Activated T-helper 1 cell treated with anti-CD3 and anti-CD28 coated beads, Interleukin-12 subunit alpha, Interleukin-12 subunit beta, Interleukin-2, Interleukin-4 antibody, amounts not matched to agents 30 ng/mL and 10 ng/mL and 1 ng/mL, durations not matched to agents 14 hours and 24 hours and 36 hours (primary cell): ENCODE measurements at regions of chr19 and their contacts with region 1.

Region 1: DNA sequence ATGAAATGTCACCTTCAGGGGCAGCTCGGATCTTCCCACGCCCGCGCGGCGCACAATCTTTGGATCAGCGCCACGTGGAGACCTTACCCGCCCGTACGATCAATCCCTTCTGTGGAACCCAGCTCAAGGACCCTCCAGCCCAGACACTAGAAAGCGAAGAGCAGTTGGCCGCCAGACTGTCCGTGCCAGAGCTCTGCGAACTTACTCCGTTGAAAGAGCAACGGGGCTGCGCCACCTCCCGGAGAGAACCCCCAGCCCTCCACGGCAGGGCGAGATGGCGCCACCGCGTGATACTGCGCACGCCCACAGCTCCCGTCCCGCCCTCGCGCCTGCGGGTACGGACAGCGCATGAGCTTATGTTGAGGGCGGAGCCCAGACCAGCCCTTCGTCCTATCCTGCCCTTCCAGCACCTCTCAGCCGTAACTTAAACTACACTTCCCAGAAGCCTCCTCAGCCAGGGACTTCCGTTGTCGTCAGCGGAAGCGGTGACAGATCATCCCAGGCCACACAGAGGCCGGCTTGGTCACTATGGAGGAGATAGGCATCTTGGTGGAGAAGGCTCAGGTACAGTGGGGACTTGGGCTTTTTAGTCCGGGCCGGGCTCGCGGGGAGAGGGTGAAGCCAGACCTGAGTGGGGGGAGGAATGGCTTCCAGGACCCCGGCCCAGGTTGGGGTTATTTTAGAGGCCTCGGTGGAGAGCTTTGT is at the start of gene PSMC4:
- DNase-seq: peak; percentile 99
- H3K4me3 Mint-ChIP-seq: peak within 1 kb of the TSS; percentile 95
- H3K27ac Mint-ChIP-seq: peak within 1 kb of the TSS; percentile 97
- H3K4me1 Mint-ChIP-seq: peaks cover 54% of the 10 kb centered on the region
- H3K27me3 Mint-ChIP-seq: no peaks in the 10 kb centered on the region
- total RNA-seq, gene PSMC4: 189 and 190 TPM in 2 replicates

Region 2: DNA sequence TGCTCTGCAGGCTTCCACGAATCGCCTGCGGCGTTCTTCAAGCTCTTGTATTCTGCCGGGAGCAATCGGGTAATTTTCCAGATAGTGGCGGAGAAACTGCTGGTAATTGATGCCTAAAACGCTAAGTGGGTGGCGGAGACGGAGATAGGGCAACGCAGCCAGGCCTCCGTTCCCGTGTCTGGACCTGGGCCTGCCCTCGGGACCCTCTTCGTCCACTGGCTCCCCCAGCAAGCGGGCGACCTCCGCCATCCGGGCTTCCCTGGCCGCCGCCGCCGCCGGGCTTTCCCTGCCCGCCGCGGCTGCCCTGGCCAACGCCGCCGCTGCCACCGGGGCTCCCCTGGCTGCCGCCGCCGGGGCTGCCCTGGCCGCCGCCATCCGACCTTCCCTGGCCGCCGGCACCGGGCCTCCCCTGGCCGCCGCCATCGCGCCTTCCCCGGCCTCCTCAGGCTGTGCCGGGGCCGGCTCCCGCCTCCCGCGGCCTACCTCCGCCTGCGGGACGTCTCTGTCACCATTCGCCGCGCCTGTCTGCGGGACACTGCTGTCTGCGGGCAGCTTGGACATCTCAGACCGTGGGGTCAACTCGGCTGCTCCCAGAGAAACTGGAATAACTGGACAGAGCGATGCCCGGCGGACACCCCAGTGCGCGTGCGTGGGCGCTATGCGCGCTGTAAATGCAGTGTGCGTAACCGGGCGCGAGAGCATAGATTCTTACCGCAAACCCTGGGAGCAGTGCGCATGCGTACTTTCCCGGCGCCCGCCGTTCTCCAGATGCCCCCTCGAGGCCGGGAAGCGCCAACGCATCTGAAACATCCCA is 431.1 kb before region 1 on chr19 and contains the start of gene EID2:
- intact Hi-C with region 1: loop called (anchors 1 kb)
- DNase-seq: peak; percentile 92
- H3K4me3 Mint-ChIP-seq: peak within 1 kb of the TSS; percentile 95
- H3K27ac Mint-ChIP-seq: peak within 1 kb of the TSS; percentile 91
- H3K4me1 Mint-ChIP-seq: peaks cover 36% of the 10 kb centered on the region
- H3K27me3 Mint-ChIP-seq: peaks cover 2% of the 10 kb centered on the region
- total RNA-seq, gene EID2: 17.0 and 17.6 TPM in 2 replicates

Region 3: DNA sequence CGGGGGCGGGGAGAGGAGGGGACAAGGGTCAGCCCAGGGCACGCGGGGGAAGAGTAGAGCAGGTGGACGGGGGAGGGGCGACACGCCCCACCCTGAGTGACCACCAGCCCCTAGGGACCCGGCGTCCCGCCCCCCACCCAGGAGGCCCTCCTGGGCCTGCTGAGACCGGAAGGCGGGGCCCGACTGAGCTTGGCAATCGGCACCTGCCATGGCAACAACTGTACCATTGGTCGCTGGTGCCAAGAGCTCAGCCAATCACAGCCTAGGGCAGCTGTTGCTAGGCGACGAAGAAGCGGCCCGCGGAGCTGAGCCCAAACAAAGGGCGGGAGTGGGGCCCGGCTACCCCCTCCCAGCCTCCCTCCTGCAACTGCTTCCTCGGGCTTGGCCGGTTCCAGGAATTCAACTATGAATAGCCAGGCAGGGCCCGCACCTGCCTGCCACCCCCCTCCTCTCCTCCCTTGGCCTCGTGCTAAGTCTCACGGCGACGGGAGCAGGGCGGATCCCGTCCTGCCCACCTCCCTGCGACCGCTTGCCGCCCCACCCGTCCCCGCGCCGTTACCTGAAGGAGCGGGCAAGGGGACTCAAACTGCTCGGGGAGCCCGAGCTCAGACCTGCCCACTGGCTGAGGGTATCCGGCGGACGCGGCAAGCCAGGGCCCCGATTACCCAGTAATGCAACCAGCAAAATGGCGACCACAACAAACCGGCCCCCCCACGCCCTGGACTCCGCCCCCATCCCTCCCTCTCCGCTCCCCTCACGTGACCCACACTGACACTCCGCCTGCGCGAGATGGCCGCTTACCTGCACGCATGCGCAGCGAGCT is 137.2 kb before region 1 on chr19 and contains the start of gene DYRK1B:
- intact Hi-C with region 1: loop called (anchors 2 kb)
- DNase-seq: peak; percentile 95
- H3K4me3 Mint-ChIP-seq: peak within 1 kb of the TSS; percentile 69
- H3K27ac Mint-ChIP-seq: peak within 1 kb of the TSS; percentile 78
- H3K4me1 Mint-ChIP-seq: peaks cover 35% of the 10 kb centered on the region
- H3K27me3 Mint-ChIP-seq: no peaks in the 10 kb centered on the region
- total RNA-seq, gene DYRK1B: 4.2 and 5.5 TPM in 2 replicates

Region 4: DNA sequence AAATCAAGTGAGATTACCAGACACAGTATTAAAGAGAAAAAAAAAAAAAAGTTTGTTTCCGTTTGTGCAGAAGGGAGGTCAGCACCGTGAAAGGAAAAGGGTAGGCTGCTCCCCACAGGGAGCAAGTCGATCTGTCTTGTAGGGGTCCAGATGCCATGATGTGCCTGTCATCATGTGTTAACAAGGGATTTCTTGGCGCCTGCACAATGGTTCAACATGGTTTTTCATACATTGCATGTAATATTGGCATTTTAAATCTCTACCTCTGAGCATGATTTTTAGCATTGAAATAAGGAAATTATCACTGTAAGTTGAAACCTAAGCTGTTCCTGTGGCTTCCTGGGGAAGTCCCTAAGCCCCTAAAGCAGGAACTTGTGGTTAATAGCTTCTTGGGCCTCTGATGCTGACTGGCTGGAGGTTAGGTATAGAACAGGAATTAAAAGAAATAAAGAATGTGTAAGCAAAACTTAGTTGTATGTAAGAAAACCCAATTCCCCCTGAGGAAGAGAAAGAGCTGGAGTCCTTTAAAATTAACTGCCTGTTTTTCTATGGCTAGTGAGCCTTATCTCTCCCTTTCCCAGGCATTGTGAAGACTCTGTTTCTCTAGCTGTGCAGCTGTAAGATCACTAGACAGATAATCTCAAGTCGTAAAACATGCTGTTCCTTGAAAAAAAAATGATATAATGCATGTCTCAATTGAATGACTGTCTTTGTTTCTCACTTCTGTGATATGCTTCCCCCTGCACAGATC is 29.0 kb before region 1 on chr19:
- intact Hi-C with region 1: loop called (anchors 1 kb)
- DNase-seq: peak; percentile 45
- H3K4me3 Mint-ChIP-seq: peak overlapping the region; percentile 63
- H3K27ac Mint-ChIP-seq: peak overlapping the region; percentile 86
- H3K4me1 Mint-ChIP-seq: peaks cover 77% of the 10 kb centered on the region
- H3K27me3 Mint-ChIP-seq: peaks cover 2% of the 10 kb centered on the region

Region 5: DNA sequence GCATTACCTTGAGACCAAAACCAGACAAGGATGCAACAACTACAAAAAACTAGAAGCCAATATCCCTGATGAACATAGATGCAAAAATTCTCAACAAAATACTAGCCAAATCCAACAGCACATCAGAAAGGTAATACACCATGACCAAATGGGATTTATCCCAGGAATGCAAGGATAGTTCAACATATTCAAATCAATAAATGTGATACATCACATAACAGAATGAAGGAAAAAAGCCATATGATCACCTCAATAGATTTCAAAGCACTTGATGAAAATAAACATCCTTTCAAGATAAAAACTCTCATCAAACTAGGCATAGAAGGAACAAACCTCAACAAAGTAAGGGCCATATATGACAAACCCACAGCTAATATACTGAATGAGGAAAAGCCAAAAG is 15.8 kb after region 1 on chr19:
- intact Hi-C with region 1: no loop called
- DNase-seq: no peak
- H3K4me3 Mint-ChIP-seq: no peak overlapping the region
- H3K27ac Mint-ChIP-seq: no peak overlapping the region
- H3K4me1 Mint-ChIP-seq: no peaks in the 10 kb centered on the region
- H3K27me3 Mint-ChIP-seq: no peaks in the 10 kb centered on the region

Region 6: DNA sequence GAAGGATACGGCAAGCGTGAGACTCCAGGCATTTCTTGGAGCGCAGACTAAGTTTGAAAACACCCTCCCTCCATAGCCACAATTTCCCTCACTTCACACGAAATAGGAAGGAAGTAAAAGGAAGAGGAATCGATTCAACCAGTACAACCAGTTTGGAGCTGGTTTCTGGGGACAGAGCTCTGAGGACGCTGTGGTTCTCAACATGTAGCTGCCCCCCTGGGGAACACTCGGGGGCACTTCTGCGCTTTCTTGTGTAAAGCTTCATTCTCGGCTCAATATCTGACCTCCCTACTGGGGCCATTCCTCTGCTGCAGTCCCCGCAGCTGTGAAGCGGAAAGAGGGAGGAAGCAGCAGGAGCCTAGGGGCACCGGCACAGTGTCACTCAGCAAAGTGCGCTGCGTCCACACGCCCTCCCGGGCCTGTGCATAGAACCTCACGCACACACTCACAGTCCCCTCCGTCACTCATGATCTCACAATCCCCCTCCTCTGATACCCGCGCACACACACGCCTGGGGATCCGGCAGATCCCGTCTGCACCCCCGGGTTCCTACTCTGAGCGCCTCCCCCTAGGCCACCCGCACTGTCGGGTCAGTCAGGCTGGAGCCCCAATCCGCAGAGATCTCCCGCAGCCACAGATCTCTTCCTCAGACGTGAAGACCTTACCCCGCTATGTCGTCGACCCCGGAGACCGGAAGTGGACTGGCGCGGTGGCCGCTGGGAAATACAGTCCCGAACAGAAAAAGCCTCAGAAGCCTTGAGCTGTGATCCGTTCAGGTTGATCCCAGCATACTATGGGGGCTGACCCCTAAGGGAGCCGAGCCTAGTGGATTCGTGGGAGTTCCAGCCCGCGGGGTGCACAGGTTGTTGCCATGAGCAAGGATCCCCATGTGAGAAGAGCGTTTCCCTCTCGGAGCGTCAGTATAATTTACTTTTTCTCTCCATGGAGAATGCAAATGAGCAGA is 119.7 kb after region 1 on chr19 and contains the start of gene ZNF780A:
- intact Hi-C with region 1: loop called (anchors 1 kb)
- DNase-seq: peak; percentile 73
- H3K4me3 Mint-ChIP-seq: peak within 1 kb of the TSS; percentile 100
- H3K27ac Mint-ChIP-seq: peak within 1 kb of the TSS; percentile 99
- H3K4me1 Mint-ChIP-seq: peaks cover 43% of the 10 kb centered on the region
- H3K27me3 Mint-ChIP-seq: peaks cover 3% of the 10 kb centered on the region
- total RNA-seq, gene ZNF780A: 14.8 and 16.7 TPM in 2 replicates

Region 7: DNA sequence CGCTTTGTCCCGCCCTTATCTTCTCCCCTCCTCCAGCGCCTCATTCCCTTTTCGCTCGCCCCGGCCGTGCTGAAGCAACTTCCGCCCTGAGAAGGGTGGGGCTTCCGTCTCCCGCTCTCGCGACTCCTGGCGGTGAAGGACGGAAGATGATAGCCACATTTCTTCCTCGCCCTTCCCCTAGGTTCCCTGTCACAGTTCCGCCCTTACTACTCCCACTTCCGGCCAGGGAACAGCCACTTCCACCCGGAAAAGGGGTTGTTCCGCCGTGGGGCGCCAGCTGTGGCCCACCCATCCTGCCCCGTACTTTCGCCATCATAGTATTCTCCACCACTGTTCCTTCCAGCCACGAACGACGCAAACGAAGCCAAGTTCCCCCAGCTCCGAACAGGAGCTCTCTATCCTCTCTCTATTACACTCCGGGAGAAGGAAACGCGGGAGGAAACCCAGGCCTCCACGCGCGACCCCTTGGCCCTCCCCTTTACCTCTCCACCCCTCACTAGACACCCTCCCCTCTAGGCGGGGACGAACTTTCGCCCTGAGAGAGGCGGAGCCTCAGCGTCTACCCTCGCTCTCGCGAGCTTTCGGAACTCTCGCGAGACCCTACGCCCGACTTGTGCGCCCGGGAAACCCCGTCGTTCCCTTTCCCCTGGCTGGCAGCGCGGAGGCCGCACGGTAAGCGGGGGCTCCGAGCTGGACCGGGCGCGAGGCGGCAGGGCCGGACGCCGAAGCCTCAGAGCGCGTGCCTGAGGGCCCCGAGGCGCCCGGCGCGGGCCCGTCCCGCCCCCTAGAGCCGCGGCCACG is 1889.0 kb after region 1 on chr19 and contains the start of gene RPS19:
- intact Hi-C with region 1: loop called (anchors 2 kb)
- DNase-seq: peak; percentile 97
- H3K4me3 Mint-ChIP-seq: peak within 1 kb of the TSS; percentile 95
- H3K27ac Mint-ChIP-seq: peak within 1 kb of the TSS; percentile 97
- H3K4me1 Mint-ChIP-seq: peaks cover 39% of the 10 kb centered on the region
- H3K27me3 Mint-ChIP-seq: peaks cover 9% of the 10 kb centered on the region
- total RNA-seq, gene RPS19: 2,887 and 2,906 TPM in 2 replicates